ENCODE measurements at regions of chrX and their contacts with region 1.

Region 1: GRCh38 chrX:133792198-133792953 is 193.0 kb downstream of the GPC3 start:
- DNase-seq: no peak
- H3K4me3 ChIP-seq: peak overlapping the region in 3 of 4 donors; percentile 20 to 39 (median 35)
- H3K27ac ChIP-seq: no peak overlapping the region
- H3K4me1 ChIP-seq: no peaks in the 10 kb centered on the region
- H3K27me3 ChIP-seq: no peaks in the 10 kb centered on the region
- CTCF ChIP-seq: peak; percentile 79 to 88 (median 84)
- EP300 ChIP-seq: no peak
- POLR2A ChIP-seq: no peak

Region 2: DNA sequence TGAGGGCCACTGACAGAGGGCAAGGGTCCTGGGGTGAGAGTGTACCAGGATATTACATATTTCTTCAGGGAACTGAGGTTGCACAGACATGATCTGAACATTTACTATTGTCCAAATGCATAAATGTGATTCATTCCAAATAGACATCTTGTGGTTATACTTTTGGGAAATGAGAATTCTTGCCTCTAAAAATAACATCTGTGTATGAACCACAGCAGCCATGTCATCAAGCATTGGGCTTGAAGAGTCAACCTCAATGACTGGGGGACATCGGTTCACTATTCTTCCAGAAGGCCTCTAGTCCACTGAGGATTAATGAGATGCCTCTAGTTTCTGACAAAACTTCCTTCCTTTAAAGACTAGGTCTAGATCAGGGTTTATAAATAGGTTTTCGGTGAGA is 184.0 kb before region 1 on chrX:
- intact Hi-C with region 1: no loop called
- DNase-seq: no peak
- H3K4me3 ChIP-seq: no peak overlapping the region
- H3K27ac ChIP-seq: no peak overlapping the region
- H3K4me1 ChIP-seq: peaks cover 0 to 19% (median 14%) of the 10 kb centered on the region in 4 donors
- H3K27me3 ChIP-seq: no peaks in the 10 kb centered on the region
- CTCF ChIP-seq: no peak
- EP300 ChIP-seq: no peak
- POLR2A ChIP-seq: no peak

Region 3: GRCh38 chrX:134026565-134027311 is 234.4 kb after region 1 on chrX:
- intact Hi-C with region 1: loop called (anchors 5 kb)
- DNase-seq: no peak
- H3K4me3 ChIP-seq: peak overlapping the region in 3 of 4 donors; percentile 15 to 39 (median 19)
- H3K27ac ChIP-seq: no peak overlapping the region
- H3K4me1 ChIP-seq: no peaks in the 10 kb centered on the region
- H3K27me3 ChIP-seq: no peaks in the 10 kb centered on the region
- CTCF ChIP-seq: peak; percentile 37 to 47 (median 39)
- EP300 ChIP-seq: no peak
- POLR2A ChIP-seq: no peak

Region 4: DNA sequence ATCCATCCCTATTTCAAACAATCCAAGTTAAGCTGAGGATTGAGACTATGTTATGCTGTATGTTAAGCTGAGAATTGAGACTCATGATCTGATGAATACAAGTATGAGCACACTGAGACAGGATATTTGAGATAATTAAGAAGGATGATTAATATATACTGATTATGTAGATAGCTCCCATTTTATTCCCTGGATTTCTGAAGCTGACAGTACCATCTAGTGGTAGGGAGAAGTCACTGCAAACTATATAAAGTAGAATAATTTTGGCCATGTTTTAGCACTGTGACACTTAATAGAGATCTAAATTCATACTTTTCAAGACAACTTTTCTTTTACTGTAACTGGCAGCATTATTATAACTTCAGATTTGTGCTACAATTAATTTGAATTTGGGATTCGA is 603.8 kb after region 1 on chrX:
- intact Hi-C with region 1: loop called (anchors 10 kb)
- DNase-seq: no peak
- H3K4me3 ChIP-seq: no peak overlapping the region
- H3K27ac ChIP-seq: no peak overlapping the region
- H3K4me1 ChIP-seq: no peaks in the 10 kb centered on the region
- H3K27me3 ChIP-seq: no peaks in the 10 kb centered on the region
- CTCF ChIP-seq: peak; percentile 49 to 64 (median 62)
- EP300 ChIP-seq: no peak
- POLR2A ChIP-seq: no peak

Measured in esophagus muscularis mucosa (tissue), 4 donors.